GM18951 (cell line): ENCODE measurements at regions of chr19 and their contacts with region 1.

Region 1: DNA sequence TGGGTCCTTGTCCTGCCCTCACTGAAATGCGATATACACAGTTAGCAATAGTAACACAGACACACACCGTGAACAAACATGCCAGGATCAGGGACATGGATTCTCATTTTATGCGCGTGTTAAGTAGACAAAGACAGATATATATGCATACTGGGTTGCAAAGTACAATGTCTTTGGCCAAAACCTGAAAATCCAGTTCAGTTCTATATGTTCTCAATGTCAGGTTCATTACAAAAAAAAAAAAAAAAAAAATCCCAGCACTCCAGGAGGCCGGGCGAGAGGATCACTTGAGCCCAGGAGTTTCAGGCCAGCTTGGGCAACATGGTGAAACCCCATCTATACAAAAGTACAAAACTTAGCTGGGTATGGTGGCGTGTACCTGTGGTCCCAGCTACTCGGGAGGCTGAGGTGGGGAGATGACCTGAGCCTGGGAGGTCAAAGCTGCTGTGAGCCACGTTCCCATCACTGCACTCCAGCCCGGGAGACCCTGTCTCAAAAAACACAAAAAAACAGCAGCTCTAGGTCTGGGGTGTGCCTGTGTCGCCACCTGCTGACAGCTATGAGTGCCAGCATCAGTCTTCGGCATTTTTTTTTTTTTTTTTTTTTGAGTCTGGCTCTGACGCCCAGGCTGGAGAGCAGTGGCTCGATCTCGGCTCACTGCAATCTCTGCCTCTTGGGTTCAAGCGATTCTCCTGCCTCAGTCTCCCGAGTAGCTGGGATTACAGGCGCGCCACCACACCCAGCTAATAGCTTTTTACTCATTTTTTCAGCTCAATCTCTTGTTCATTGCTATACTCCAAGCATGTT is 10.3 kb downstream of the AP2S1 start:
- POLR2A ChIP-seq: no peak

Region 2: DNA sequence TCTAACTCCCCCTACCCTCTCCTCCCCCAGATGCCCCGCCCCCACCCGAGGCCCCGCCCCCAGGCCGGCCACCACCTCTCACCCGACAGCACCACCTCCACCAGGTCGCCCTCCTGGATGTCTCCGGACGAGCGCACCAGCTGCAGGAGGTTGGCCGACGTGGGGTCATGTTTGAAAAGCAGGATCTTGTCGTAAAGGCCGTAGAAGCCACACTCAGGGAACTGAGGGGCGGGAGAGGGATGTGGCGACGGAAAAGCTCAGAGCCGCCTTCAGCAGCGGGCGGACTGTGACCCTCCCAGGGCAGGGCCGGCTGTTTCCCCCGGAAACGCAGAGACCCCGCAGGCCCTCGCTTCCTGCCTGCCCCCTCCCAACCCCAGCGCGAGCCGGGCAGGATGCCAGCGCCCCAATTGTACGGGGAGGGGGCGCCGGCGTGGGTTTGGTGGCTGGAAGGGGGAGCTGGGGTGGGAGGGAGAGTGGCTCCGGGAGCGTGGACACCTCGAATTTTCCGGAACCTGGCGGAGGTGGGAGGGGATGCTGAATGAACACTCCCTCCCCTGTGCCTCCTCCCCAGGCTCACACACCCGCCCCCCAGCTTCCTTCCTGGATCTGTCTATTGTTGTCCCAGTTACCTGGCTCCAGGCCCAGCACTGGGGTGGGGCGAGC is 126.4 kb before region 1 on chr19:
- in situ Hi-C with region 1: no loop called
- POLR2A ChIP-seq: no peak

Region 3: DNA sequence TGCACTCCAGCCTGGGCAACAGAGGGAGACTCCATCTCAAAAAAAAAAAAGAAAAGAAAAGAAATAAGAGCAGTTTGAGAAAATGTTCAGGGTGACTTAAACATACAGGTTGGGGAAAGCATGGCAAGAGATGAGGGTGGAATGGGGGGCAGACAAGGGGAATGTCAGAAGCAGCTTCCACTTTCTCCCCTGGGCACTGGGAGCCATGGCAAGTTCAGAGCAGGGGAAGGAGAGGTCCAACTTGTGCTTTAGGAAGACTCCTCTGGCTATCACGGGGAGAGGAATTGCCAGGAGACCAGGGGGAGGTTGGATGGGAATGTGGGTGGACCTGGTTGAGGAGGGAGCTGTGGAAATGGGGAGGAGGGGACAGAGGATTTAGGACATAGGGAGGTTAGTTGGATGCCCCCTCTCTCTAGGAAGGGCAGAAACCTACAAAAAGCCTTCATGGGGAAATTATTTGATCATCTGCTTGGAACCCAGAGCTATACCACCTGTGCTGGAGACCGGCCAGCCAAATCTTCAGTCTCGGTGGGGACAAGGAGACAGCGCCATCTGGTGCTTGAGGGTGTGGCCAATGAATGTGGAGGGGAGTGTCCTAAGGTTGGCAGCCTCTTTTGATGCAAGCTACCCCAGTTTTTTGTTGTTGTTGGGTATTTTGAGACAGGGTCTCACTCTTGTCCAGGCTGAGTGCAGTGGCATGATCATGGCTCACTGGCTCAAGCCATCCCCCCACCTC is 86.8 kb before region 1 on chr19:
- in situ Hi-C with region 1: loop called (anchors 5 kb)
- POLR2A ChIP-seq: no peak

Region 4: GRCh38 chr19:46924874-46925547 is 84.7 kb after region 1 on chr19:
- in situ Hi-C with region 1: no loop called
- POLR2A ChIP-seq: no peak